ENCODE measurements at regions of chr1 and their contacts with region 1.

Region 1: GRCh38 chr1:226062558-226063223 is at the start of gene H3-3A:
- DNase-seq: peak; percentile 96
- H3K4me3 ChIP-seq: peak within 1 kb of the TSS; percentile 85 to 94
- H3K27ac ChIP-seq: peak within 1 kb of the TSS; percentile 99
- H3K4me1 ChIP-seq: peaks cover 23 to 33% of the 10 kb centered on the region in 2 experiments; a peak in 3 of 4 replicates
- H3K27me3 ChIP-seq: no peaks in the 10 kb centered on the region
- CTCF ChIP-seq: no peak
- EP300 ChIP-seq: peak in 1 of 2 experiments; percentile 26; a peak in 1 of 4 replicates
- RAD21 ChIP-seq: no peak
- polyA plus RNA-seq, gene H3-3A: 315 and 370 TPM in 2 replicates

Region 2: GRCh38 chr1:225458222-225458631 is 604.5 kb before region 1 on chr1:
- CTCF ChIA-PET with region 1: no interaction called
- POLR2A ChIA-PET with region 1: no interaction called
- DNase-seq: no peak
- H3K4me3 ChIP-seq: no peak overlapping the region
- H3K27ac ChIP-seq: no peak overlapping the region
- H3K4me1 ChIP-seq: peaks cover 26 to 35% of the 10 kb centered on the region in 2 experiments; a peak in 3 of 4 replicates
- H3K27me3 ChIP-seq: no peaks in the 10 kb centered on the region
- CTCF ChIP-seq: no peak
- EP300 ChIP-seq: no peak
- RAD21 ChIP-seq: no peak

Region 3: GRCh38 chr1:225999227-225999911 is 63.3 kb before region 1 on chr1 and contains the start of gene SDE2:
- CTCF ChIA-PET with region 1: interaction called, 9 read pairs
- POLR2A ChIA-PET with region 1: interaction called, 38 read pairs
- DNase-seq: peak; percentile 98
- H3K4me3 ChIP-seq: peak within 1 kb of the TSS; percentile 84 to 97
- H3K27ac ChIP-seq: peak within 1 kb of the TSS; percentile 75 to 97
- H3K4me1 ChIP-seq: peaks cover 28 to 38% of the 10 kb centered on the region in 2 experiments
- H3K27me3 ChIP-seq: no peaks in the 10 kb centered on the region
- CTCF ChIP-seq: no peak
- EP300 ChIP-seq: peak in 1 of 2 experiments; percentile 57; a peak in 1 of 4 replicates
- RAD21 ChIP-seq: no peak; the same call in 1 of the 2 replicates
- polyA plus RNA-seq, gene SDE2: 10.1 and 15.1 TPM in 2 replicates

Region 4: DNA sequence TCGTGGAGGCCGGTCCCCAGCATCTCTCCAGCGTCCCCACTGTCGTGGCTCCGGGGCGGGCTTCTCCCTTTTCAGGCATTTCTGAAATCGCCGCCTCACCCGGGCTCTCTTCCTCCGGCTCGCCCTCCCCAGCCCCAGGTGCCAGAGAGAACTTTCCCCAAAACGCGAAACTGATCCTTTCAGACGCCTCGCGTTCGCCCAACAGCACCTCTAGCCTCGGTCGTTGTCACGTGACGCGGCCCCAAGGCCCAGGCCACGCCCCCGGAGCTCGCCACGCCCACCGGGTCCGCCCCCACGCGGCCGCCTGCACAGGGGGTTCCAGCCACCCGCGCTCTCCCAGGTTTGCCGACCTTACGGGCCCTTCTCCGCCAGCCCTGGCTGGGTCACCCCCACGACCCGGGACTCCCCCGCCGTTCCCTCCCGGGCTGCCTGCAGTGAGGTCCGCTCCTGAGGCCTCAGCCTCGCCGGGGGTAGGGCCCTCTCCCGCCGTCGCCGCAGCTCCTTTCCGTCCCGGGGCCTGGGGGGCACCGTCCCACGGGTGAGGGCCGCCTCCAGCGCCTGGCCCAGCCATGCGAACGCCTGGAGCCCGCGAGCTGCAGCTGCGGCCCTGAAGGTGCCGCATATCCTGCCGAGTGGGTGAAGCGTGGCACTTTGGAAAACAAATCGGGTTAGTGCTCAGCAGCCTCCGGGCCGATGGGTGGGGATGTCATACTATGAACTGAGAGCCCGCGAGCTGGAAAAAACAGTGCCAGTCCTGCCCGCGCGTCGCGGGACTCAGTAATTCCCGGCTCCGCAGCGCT is 20.8 kb after region 1 on chr1:
- CTCF ChIA-PET with region 1: interaction called, 94 read pairs
- POLR2A ChIA-PET with region 1: interaction called, 23 read pairs
- DNase-seq: peak; percentile 98
- H3K4me3 ChIP-seq: peak overlapping the region; percentile 64 to 81
- H3K27ac ChIP-seq: peak overlapping the region; percentile 64 to 82
- H3K4me1 ChIP-seq: peaks cover 0 to 5% of the 10 kb centered on the region in 2 experiments; a peak in 2 of 4 replicates
- H3K27me3 ChIP-seq: no peaks in the 10 kb centered on the region
- CTCF ChIP-seq: no peak
- EP300 ChIP-seq: no peak
- RAD21 ChIP-seq: peak; percentile 18; the same call in 1 of the 2 replicates

Region 5: GRCh38 chr1:226109829-226110248 is 47.1 kb after region 1 on chr1:
- CTCF ChIA-PET with region 1: interaction called, 31 read pairs
- POLR2A ChIA-PET with region 1: interaction called, 30 read pairs
- DNase-seq: peak; percentile 99
- H3K4me3 ChIP-seq: peak overlapping the region; percentile 58 to 71
- H3K27ac ChIP-seq: peak overlapping the region; percentile 84 to 95
- H3K4me1 ChIP-seq: peaks cover 15 to 19% of the 10 kb centered on the region in 2 experiments; a peak in 3 of 4 replicates
- H3K27me3 ChIP-seq: no peaks in the 10 kb centered on the region
- CTCF ChIP-seq: no peak
- EP300 ChIP-seq: no peak
- RAD21 ChIP-seq: peak; percentile 24; the same call in 1 of the 2 replicates

Region 6: DNA sequence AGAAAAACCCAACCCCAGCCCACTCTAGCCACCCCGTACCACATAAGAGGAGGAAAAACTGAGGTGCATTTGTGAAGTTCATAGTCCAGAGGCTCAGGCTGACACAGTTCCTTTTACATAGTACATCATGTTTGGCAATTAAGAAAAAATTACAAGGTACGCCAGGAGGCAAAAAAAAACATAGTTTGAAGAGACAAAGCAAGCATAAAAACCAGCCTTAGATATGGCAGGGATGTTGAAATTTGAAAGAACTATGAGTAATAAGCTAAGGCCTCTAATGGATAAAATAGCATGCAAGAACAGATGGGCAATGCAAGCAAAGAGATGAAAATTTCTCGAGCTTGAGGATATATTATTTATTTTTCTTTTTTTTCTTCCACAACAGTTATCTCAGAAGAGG is 192.7 kb after region 1 on chr1:
- CTCF ChIA-PET with region 1: no interaction called
- POLR2A ChIA-PET with region 1: no interaction called
- DNase-seq: no peak
- H3K4me3 ChIP-seq: no peak overlapping the region
- H3K27ac ChIP-seq: no peak overlapping the region
- H3K4me1 ChIP-seq: no peaks in the 10 kb centered on the region
- H3K27me3 ChIP-seq: no peaks in the 10 kb centered on the region
- CTCF ChIP-seq: no peak
- EP300 ChIP-seq: no peak
- RAD21 ChIP-seq: no peak

Measured in SK-N-SH (cell line).